ENCODE measurements at regions of chr6 and their contacts with region 1.

Region 1: GRCh38 chr6:13614926-13615798 is at the start of gene NOL7:
- DNase-seq: peak; percentile 98
- H3K4me3 ChIP-seq: peak within 1 kb of the TSS; percentile 71 to 75
- H3K4me3 Mint-ChIP-seq: peak within 1 kb of the TSS; percentile 94 to 98 (median 97)
- H3K27ac ChIP-seq: peak within 1 kb of the TSS; percentile 82
- H3K27ac Mint-ChIP-seq: peak within 1 kb of the TSS; percentile 90 to 98 (median 97)
- H3K4me1 ChIP-seq: peaks cover 36% of the 10 kb centered on the region
- H3K4me1 Mint-ChIP-seq: peaks cover 25 to 54% (median 38%) of the 10 kb centered on the region in 4 donors
- H3K27me3 ChIP-seq: no peaks in the 10 kb centered on the region
- H3K27me3 Mint-ChIP-seq: no peaks in the 10 kb centered on the region
- total RNA-seq, gene NOL7: 62.1 to 69.1 TPM

Region 2: GRCh38 chr6:13328076-13328874 is 286.9 kb before region 1 on chr6 and contains the start of gene TBC1D7:
- CTCF ChIA-PET with region 1: interaction called, 8 read pairs
- POLR2A ChIA-PET with region 1: interaction called, 12 read pairs
- intact Hi-C with region 1: loop called (anchors 2 kb)
- DNase-seq: peak; percentile 92 to 95 (median 94)
- H3K4me3 ChIP-seq: peak within 1 kb of the TSS; percentile 89 to 91
- H3K4me3 Mint-ChIP-seq: peak within 1 kb of the TSS; percentile 94 to 98 (median 96)
- H3K27ac ChIP-seq: peak within 1 kb of the TSS; percentile 90
- H3K27ac Mint-ChIP-seq: peak within 1 kb of the TSS; percentile 96 to 99 (median 98)
- H3K4me1 ChIP-seq: peaks cover 23% of the 10 kb centered on the region
- H3K4me1 Mint-ChIP-seq: peaks cover 9 to 33% (median 22%) of the 10 kb centered on the region in 4 donors
- H3K27me3 ChIP-seq: no peaks in the 10 kb centered on the region
- H3K27me3 Mint-ChIP-seq: no peaks in the 10 kb centered on the region
- total RNA-seq, gene TBC1D7: 12.6 to 13.2 TPM

Region 3: DNA sequence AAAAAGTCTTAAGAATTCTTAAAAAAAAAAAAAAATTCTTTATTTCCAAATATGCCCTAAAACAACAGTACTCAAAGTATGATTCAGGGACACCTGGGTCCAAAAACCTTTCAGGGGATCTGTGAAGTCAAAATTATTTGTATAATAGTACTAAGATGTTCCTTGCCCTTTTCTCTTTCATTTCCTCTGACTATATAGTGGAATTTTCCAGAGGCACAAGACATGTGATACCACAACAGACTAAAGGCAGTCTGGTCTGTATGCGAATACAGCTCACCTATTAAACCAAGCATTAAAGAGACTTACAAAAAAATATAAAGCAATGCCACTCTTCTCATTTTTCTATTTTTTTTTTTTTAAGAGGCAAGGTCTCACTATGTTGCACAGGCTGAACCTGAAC is 15.3 kb after region 1 on chr6:
- CTCF ChIA-PET with region 1: interaction called, 15 read pairs
- POLR2A ChIA-PET with region 1: interaction called, 23 read pairs
- intact Hi-C with region 1: no loop called
- DNase-seq: no peak
- H3K4me3 ChIP-seq: no peak overlapping the region
- H3K4me3 Mint-ChIP-seq: no peak overlapping the region
- H3K27ac ChIP-seq: no peak overlapping the region
- H3K27ac Mint-ChIP-seq: peak overlapping the region in 2 of 7 donors; percentile 26 to 42
- H3K4me1 ChIP-seq: peaks cover under 1% of the 10 kb centered on the region
- H3K4me1 Mint-ChIP-seq: peaks cover 4 to 22% (median 7%) of the 10 kb centered on the region in 4 donors
- H3K27me3 ChIP-seq: no peaks in the 10 kb centered on the region
- H3K27me3 Mint-ChIP-seq: no peaks in the 10 kb centered on the region

Region 4: GRCh38 chr6:13687917-13688351 is 72.8 kb after region 1 on chr6:
- CTCF ChIA-PET with region 1: interaction called, 17 read pairs
- POLR2A ChIA-PET with region 1: interaction called, 15 read pairs
- intact Hi-C with region 1: no loop called
- DNase-seq: peak; percentile 48 to 68 (median 55)
- H3K4me3 ChIP-seq: no peak overlapping the region
- H3K4me3 Mint-ChIP-seq: peak overlapping the region; percentile 57 to 89 (median 80)
- H3K27ac ChIP-seq: peak overlapping the region; percentile 52
- H3K27ac Mint-ChIP-seq: peak overlapping the region; percentile 91 to 96 (median 95)
- H3K4me1 ChIP-seq: peaks cover 84% of the 10 kb centered on the region
- H3K4me1 Mint-ChIP-seq: peaks cover 52 to 71% (median 61%) of the 10 kb centered on the region in 4 donors
- H3K27me3 ChIP-seq: no peaks in the 10 kb centered on the region
- H3K27me3 Mint-ChIP-seq: no peaks in the 10 kb centered on the region

Region 5: DNA sequence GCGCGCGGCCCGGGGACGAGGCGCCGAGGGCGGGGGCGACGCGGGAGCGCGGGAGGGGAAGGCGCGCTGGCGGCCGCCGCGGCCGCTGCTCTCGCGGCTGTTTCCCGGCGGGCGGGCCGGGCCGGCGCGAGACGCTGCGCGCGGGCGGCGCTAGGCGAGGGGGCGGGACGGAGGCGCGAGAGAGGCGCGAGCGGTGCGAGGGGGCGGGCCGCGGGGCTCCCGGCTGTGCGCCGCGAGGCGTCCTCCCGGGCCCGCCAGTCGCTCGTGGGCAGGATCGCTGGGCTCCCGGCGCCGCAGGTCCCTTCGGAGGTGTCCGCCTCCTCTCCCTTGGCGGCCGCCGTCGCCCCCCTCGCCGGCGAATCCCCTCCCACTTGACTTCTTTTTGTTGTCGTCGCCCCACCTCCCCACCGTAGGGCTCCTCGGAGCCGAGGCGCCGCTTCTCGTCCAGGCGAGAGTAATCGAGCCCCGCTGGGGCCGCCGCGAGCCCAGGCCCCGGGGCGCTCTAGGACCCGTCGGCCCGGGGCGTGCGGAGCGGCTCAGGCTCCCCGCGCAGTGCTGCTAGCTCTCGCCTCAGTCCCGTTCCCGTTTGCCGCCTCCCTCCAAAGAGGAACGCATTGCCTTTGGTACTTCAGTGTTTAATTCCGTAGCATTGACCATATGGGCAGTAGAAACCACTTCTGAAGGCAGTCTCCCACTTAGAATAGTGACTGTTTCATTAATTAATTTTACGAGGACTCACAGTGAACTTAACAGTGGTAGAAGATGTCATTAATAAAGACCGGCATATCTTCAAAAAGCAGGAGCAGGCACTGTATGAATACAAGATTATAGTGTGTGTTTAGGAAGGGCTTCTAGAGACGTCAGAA is 96.8 kb after region 1 on chr6 and contains the start of gene RANBP9:
- CTCF ChIA-PET with region 1: interaction called, 34 read pairs
- POLR2A ChIA-PET with region 1: interaction called, 128 read pairs
- intact Hi-C with region 1: loop called (anchors 1 kb)
- DNase-seq: peak; percentile 89 to 92 (median 91)
- H3K4me3 ChIP-seq: peak within 1 kb of the TSS; percentile 69 to 74
- H3K4me3 Mint-ChIP-seq: peak within 1 kb of the TSS; percentile 95 to 99 (median 96)
- H3K27ac ChIP-seq: peak within 1 kb of the TSS; percentile 87
- H3K27ac Mint-ChIP-seq: peak within 1 kb of the TSS; percentile 98 to 99 (median 99)
- H3K4me1 ChIP-seq: peaks cover 50% of the 10 kb centered on the region
- H3K4me1 Mint-ChIP-seq: peaks cover 28 to 73% (median 44%) of the 10 kb centered on the region in 4 donors
- H3K27me3 ChIP-seq: no peaks in the 10 kb centered on the region
- H3K27me3 Mint-ChIP-seq: no peaks in the 10 kb centered on the region
- total RNA-seq, gene RANBP9: 51.1 to 52.9 TPM

Region 6: DNA sequence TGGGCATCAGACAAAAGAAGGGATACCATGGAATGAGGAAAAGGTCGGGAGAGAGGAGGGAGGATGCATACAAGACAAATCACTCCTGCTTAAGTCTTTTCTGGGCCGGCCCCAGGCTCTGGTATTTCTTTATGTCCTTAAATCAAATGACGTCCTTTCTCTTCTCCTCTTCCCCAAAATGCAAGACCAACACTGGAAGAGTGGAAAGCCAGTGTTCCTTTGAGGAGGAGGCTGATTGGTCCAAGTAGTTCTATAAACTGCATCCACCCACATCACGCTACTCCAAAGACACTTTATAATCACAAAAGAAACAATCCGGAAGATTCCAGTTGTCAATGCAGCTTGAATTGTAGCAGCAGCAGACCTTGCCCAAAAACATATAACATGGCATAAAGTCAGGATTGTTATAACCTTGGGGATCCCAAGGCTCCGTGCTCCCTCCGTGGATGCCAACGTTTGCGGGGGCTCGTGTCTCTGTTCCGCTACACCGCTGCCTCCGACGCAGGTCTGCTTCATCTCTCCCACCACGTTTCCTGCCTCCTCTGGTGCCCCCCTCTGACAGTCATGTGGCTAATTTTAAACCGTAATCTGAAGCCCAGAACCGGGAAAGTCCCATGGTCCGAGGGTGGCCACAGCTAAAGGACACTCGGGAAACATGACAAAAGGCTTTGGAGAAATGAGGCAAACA is 152.1 kb after region 1 on chr6:
- CTCF ChIA-PET with region 1: interaction called, 10 read pairs
- POLR2A ChIA-PET with region 1: interaction called, 7 read pairs
- intact Hi-C with region 1: loop called (anchors 2 kb)
- DNase-seq: peak in 4 of 5 donors; percentile 11 to 25 (median 22)
- H3K4me3 ChIP-seq: peak overlapping the region in 1 of 2 donors; percentile 32
- H3K4me3 Mint-ChIP-seq: peak overlapping the region in 7 of 8 donors; percentile 65 to 80 (median 74)
- H3K27ac ChIP-seq: no peak overlapping the region
- H3K27ac Mint-ChIP-seq: peak overlapping the region in 5 of 7 donors; percentile 43 to 89 (median 61)
- H3K4me1 ChIP-seq: peaks cover 19% of the 10 kb centered on the region
- H3K4me1 Mint-ChIP-seq: peaks cover 23 to 44% (median 31%) of the 10 kb centered on the region in 4 donors
- H3K27me3 ChIP-seq: no peaks in the 10 kb centered on the region
- H3K27me3 Mint-ChIP-seq: no peaks in the 10 kb centered on the region

Region 7: DNA sequence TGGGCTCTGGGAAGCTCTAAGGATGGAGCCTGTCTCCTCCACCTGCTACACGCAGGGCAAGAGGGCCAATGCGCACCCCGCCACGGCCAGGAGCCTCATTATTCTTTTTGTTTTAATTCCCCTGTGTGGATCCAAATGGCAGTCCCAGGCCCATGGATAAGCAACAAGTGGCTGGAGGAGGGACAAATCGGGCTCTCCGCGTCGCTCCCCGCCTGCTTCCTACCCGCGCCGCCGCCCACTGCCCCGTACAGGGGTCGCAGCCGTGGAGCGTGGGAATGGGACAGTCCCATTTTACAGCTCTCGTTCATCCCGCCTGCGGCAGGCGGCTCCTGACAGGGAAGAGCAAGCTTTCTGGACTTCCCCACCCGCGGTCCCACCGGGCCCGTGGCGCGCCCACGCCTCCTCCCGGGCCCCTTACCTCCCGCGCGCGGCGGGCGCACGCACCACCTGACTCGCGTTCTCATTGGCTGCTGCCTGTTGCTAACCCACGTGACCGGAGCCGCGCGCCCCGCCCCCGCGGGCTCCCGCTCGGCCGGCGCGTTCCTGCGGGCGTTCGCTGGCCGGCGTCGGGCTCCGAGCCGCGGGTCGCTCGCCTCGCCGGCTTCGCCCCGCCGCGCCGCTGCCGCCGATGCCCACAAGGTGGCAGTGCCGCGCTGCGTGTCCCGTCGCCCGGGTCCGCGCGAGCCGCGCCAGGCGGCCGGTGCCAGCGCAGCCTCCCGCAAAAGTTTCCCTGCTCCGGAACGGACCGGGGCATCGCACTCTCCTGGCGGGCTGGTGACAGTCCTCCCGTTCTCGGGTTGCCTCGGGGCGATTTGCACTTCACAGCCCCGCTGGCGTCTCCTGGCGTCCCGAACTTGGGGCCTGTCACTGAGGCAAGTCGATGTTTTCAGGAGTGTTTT is 595.8 kb after region 1 on chr6:
- CTCF ChIA-PET with region 1: no interaction called
- POLR2A ChIA-PET with region 1: no interaction called
- intact Hi-C with region 1: no loop called
- DNase-seq: peak; percentile 87 to 93 (median 90)
- H3K4me3 ChIP-seq: peak overlapping the region; percentile 71 to 90
- H3K4me3 Mint-ChIP-seq: peak overlapping the region; percentile 86 to 92 (median 89)
- H3K27ac ChIP-seq: peak overlapping the region; percentile 45
- H3K27ac Mint-ChIP-seq: peak overlapping the region; percentile 22 to 86 (median 77)
- H3K4me1 ChIP-seq: peaks cover 9% of the 10 kb centered on the region
- H3K4me1 Mint-ChIP-seq: peaks cover 6 to 22% (median 13%) of the 10 kb centered on the region in 4 donors
- H3K27me3 ChIP-seq: no peaks in the 10 kb centered on the region
- H3K27me3 Mint-ChIP-seq: no peaks in the 10 kb centered on the region